ENCODE measurements at regions of chr1 and their contacts with region 1.

Region 1: DNA sequence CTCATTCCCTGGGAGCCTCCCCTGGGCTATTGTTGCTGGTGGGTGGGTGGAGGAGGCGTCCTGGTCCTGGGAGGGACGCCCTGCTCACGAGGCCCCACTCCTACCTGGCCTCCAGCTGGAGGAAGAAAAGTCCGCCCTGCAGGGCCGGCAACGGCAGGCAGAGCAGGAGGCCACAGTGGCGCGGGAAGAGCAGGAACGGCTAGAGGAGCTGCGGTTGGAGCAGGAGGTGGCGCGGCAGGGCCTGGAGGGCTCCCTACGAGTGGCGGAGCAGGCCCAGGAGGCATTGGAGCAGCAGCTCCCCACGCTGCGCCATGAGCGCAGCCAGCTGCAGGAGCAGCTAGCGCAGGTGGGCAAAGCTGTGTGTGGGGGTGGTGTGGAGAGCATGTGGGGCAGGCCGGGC is 24.9 kb downstream of the CROCC start:
- DNase-seq: no peak
- H3K4me3 ChIP-seq: no peak overlapping the region
- H3K27ac ChIP-seq: no peak overlapping the region
- H3K4me1 ChIP-seq: no peaks in the 10 kb centered on the region
- H3K27me3 ChIP-seq: no peaks in the 10 kb centered on the region
- CTCF ChIP-seq: no peak
- POLR2A ChIP-seq: no peak

Region 2: GRCh38 chr1:16618719-16619118 is 327.9 kb before region 1 on chr1:
- CTCF ChIA-PET with region 1: interaction called, 69 read pairs
- POLR2A ChIA-PET with region 1: interaction called, 6 read pairs
- dilution Hi-C with region 1: no loop called
- intact Hi-C with region 1: loop called (anchors 1 kb)
- DNase-seq: no peak
- H3K4me3 ChIP-seq: no peak overlapping the region
- H3K27ac ChIP-seq: no peak overlapping the region
- H3K4me1 ChIP-seq: peaks cover 2% of the 10 kb centered on the region
- H3K27me3 ChIP-seq: no peaks in the 10 kb centered on the region
- CTCF ChIP-seq: no peak
- POLR2A ChIP-seq: no peak

Region 3: GRCh38 chr1:16960560-16961296 is 14.1 kb after region 1 on chr1:
- CTCF ChIA-PET with region 1: interaction called, 32 read pairs
- POLR2A ChIA-PET with region 1: no interaction called
- dilution Hi-C with region 1: no loop called
- intact Hi-C with region 1: loop called (anchors 1 kb)
- DNase-seq: peak; percentile 69
- H3K4me3 ChIP-seq: peak overlapping the region in 2 of 3 experiments; percentile 18 to 27
- H3K27ac ChIP-seq: no peak overlapping the region
- H3K4me1 ChIP-seq: no peaks in the 10 kb centered on the region
- H3K27me3 ChIP-seq: no peaks in the 10 kb centered on the region
- CTCF ChIP-seq: peak; percentile 77 to 85
- POLR2A ChIP-seq: peak; percentile 64

Region 4: GRCh38 chr1:17045634-17046333 is 99.1 kb after region 1 on chr1:
- CTCF ChIA-PET with region 1: interaction called, 85 read pairs
- POLR2A ChIA-PET with region 1: no interaction called
- dilution Hi-C with region 1: no loop called
- intact Hi-C with region 1: loop called (anchors 1 kb)
- DNase-seq: peak; percentile 60
- H3K4me3 ChIP-seq: no peak overlapping the region
- H3K27ac ChIP-seq: no peak overlapping the region
- H3K4me1 ChIP-seq: peaks cover 3% of the 10 kb centered on the region
- H3K27me3 ChIP-seq: no peaks in the 10 kb centered on the region
- CTCF ChIP-seq: peak; percentile 51 to 58
- POLR2A ChIP-seq: no peak